Activated CD4-positive, alpha-beta memory T cell treated with anti-CD3 and anti-CD28 coated beads for 36 hours (primary cell): ENCODE measurements at regions of chr11 and their contacts with region 1.

Region 1: DNA sequence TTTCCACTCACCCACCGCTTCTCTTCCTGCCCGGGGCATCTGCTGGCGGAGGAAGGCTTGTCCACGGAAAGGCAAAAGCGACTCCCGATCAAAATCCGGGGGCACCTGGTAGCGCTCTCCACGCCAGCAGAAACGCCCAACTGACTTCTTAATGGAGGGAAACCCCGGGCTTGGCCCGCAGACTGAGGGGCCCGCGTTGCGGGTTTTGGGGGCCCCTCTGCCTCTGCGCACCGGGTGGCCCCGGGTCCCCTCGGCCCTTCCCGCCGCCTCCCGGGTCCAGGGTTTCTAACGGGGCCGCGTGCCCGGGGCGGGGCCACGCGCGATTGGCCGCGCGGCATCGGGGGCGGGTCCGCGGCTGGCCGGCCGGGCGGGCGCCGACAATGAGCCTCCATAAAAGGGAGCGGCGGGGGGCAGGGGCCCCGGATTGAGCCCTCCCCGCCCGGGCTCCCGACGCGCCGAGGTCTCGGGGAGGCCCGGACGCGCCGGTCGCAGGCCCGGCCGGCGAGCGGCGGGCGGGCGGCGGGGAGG is at the start of gene SPINDOC:
- DNase-seq: peak; percentile 80
- H3K4me3 Mint-ChIP-seq: peak within 1 kb of the TSS; percentile 79
- H3K27ac Mint-ChIP-seq: no peak within 1 kb of the TSS
- H3K4me1 Mint-ChIP-seq: peaks cover 26% of the 10 kb centered on the region
- H3K27me3 Mint-ChIP-seq: no peaks in the 10 kb centered on the region
- total RNA-seq, gene SPINDOC: 27.9 to 29.3 TPM

Region 2: DNA sequence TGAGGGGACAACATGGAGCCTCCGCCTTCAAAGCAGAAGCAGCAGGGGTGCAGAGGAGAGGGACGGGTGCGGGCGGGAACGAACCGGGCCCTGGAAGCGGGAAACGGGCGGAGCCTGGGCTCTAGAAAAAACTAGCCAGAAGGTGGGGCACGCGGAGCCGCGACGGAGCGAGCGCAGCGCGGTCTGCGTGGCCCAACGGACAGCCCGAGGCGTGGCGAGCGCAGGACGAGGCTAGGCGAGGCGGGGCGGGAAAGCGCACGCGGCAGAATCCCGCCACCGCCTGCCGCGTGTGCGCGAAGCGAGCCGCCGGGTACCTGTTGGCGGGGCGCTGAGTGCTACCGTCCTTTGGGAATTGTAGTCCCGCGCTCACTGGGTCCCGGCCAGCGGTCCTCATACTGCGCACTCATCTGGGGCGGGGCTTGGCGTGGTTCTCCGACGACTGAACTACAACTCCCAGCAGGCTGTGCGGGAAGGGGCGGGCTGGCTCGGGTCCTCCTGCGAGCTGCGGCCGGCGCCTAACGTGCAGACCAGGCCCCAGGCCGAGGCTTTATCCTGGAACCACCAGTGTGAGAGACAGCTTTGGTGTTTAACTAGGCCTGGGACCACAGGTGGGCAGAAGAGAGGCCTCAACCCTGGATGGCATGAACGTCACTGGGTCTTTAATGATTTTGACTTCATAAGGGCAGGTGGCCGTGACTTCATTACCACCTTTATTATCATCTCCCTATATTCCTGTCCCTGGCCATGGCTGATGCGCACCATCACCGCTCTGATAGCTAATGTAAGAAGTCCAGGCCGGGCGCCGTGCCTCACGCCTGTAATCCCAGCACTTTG is 141.6 kb before region 1 on chr11 and contains the start of gene ATL3:
- CTCF ChIA-PET with region 1: no interaction called
- POLR2A ChIA-PET with region 1: no interaction called
- intact Hi-C with region 1: loop called (anchors 5 kb)
- DNase-seq: peak; percentile 97
- H3K4me3 Mint-ChIP-seq: peak within 1 kb of the TSS; percentile 85
- H3K27ac Mint-ChIP-seq: peak within 1 kb of the TSS; percentile 90
- H3K4me1 Mint-ChIP-seq: peaks cover 44% of the 10 kb centered on the region
- H3K27me3 Mint-ChIP-seq: no peaks in the 10 kb centered on the region
- total RNA-seq, gene ATL3: 31.3 to 34.6 TPM

Region 3: GRCh38 chr11:63916837-63917691 is 104.0 kb after region 1 on chr11 and contains the start of gene RCOR2:
- CTCF ChIA-PET with region 1: no interaction called
- POLR2A ChIA-PET with region 1: no interaction called
- intact Hi-C with region 1: no loop called
- DNase-seq: peak; percentile 71
- H3K4me3 Mint-ChIP-seq: peak within 1 kb of the TSS; percentile 76
- H3K27ac Mint-ChIP-seq: no peak within 1 kb of the TSS
- H3K4me1 Mint-ChIP-seq: peaks cover 16% of the 10 kb centered on the region
- H3K27me3 Mint-ChIP-seq: no peaks in the 10 kb centered on the region
- total RNA-seq, gene RCOR2: 0.21 to 0.27 TPM